ENCODE measurements at regions of chr4 and their contacts with region 1.

Region 1: GRCh38 chr4:7802093-7802726 is 137.5 kb downstream of the AFAP1 start:
- DNase-seq: peak; percentile 86
- H3K4me3 ChIP-seq: no peak overlapping the region
- H3K27ac ChIP-seq: no peak overlapping the region
- H3K4me1 ChIP-seq: peaks cover 42% of the 10 kb centered on the region
- H3K27me3 ChIP-seq: no peaks in the 10 kb centered on the region
- CTCF ChIP-seq: peak; percentile 86 to 91
- POLR2A ChIP-seq: no peak

Region 2: DNA sequence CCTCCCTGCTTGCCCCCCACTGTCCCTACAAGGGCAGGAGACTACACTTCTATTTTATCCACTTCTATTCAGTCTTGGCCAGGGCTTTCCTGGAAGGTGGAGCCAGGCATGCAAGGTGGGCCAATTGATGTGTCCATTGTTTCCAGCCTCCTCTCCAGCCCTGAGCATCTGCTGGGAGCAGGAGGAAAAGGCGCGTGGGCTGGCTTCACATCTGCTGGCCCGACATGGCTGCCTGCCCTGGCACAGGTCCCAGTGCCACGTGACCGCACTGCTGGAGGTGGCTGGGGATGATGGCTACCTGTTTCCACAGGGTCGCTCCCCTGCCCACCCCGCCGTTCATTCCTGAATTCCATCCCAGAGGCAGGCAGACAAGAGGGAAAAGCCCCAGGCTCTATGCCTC is 110.2 kb before region 1 on chr4:
- CTCF ChIA-PET with region 1: no interaction called
- POLR2A ChIA-PET with region 1: no interaction called
- dilution Hi-C with region 1: no loop called
- intact Hi-C with region 1: no loop called
- DNase-seq: no peak
- H3K4me3 ChIP-seq: no peak overlapping the region
- H3K27ac ChIP-seq: no peak overlapping the region
- H3K4me1 ChIP-seq: no peaks in the 10 kb centered on the region
- H3K27me3 ChIP-seq: no peaks in the 10 kb centered on the region
- CTCF ChIP-seq: no peak
- POLR2A ChIP-seq: no peak

Region 3: GRCh38 chr4:7761720-7762119 is 40.5 kb before region 1 on chr4:
- CTCF ChIA-PET with region 1: interaction called, 24 read pairs
- POLR2A ChIA-PET with region 1: no interaction called
- dilution Hi-C with region 1: no loop called
- intact Hi-C with region 1: loop called (anchors 1 kb)
- DNase-seq: peak; percentile 61
- H3K4me3 ChIP-seq: no peak overlapping the region
- H3K27ac ChIP-seq: no peak overlapping the region
- H3K4me1 ChIP-seq: peaks cover 9% of the 10 kb centered on the region
- H3K27me3 ChIP-seq: no peaks in the 10 kb centered on the region
- CTCF ChIP-seq: peak; percentile 70 to 82
- POLR2A ChIP-seq: no peak

Region 4: DNA sequence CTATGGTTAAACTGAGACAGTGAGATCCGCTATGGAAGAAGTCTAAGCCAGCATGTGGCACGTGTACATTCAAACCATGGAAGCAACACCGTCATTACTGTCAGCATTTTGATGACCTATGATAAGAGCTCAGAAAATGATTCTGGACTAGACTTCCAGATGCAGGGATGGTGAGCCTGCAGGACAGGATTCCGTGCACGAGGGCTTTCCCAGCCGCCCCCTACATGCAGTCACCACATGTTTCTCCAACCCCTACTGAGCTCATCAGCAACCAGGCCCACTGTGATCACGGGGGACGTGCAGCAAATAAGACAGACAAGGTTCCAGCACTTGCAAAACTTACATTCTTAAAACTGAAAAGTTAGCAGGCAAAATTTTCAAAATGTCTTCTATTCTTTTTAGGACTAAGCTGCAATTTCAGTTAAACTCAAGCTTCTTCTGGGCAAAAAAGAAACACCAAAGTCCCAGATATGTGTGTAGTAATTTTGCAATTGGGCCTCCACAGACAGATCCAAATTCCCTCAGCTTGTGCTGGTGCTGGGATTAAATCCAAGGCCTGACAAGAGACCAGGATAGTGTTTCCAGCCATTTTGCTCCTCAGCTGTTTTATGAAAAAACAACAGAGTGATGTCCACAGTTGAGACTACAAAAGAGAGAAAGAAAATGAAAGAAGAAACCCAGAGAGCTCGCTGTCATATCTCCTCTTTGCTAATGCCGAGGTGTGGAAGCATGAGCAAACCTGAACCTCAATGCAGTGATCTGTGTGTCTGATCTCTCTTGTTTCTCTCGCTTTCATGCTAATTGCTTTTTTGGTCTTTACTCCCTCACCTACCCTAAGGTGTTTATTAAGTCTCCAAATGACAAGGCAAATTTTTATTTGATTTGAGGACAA is 19.3 kb after region 1 on chr4:
- CTCF ChIA-PET with region 1: interaction called, 33 read pairs
- POLR2A ChIA-PET with region 1: interaction called, 4 read pairs
- dilution Hi-C with region 1: no loop called
- intact Hi-C with region 1: no loop called
- DNase-seq: no peak
- H3K4me3 ChIP-seq: no peak overlapping the region
- H3K27ac ChIP-seq: no peak overlapping the region
- H3K4me1 ChIP-seq: peaks cover 32% of the 10 kb centered on the region
- H3K27me3 ChIP-seq: no peaks in the 10 kb centered on the region
- CTCF ChIP-seq: no peak
- POLR2A ChIP-seq: no peak

Region 5: GRCh38 chr4:7861440-7861881 is 59.3 kb after region 1 on chr4:
- CTCF ChIA-PET with region 1: interaction called, 7 read pairs
- POLR2A ChIA-PET with region 1: interaction called, 3 read pairs
- dilution Hi-C with region 1: no loop called
- intact Hi-C with region 1: loop called (anchors 1 kb)
- DNase-seq: peak; percentile 90
- H3K4me3 ChIP-seq: peak overlapping the region in 1 of 3 experiments; percentile 42
- H3K27ac ChIP-seq: peak overlapping the region; percentile 99
- H3K4me1 ChIP-seq: peaks cover 55% of the 10 kb centered on the region
- H3K27me3 ChIP-seq: no peaks in the 10 kb centered on the region
- CTCF ChIP-seq: no peak
- POLR2A ChIP-seq: no peak

Region 6: GRCh38 chr4:7929118-7929951 is 127.1 kb after region 1 on chr4:
- CTCF ChIA-PET with region 1: interaction called, 55 read pairs
- POLR2A ChIA-PET with region 1: no interaction called
- dilution Hi-C with region 1: no loop called
- intact Hi-C with region 1: no loop called
- DNase-seq: no peak
- H3K4me3 ChIP-seq: no peak overlapping the region
- H3K27ac ChIP-seq: no peak overlapping the region
- H3K4me1 ChIP-seq: peaks cover 38% of the 10 kb centered on the region
- H3K27me3 ChIP-seq: no peaks in the 10 kb centered on the region
- CTCF ChIP-seq: peak in 1 of 2 donors; percentile 12
- POLR2A ChIP-seq: no peak

Region 7: GRCh38 chr4:7987148-7987989 is 185.2 kb after region 1 on chr4:
- CTCF ChIA-PET with region 1: interaction called, 163 read pairs
- POLR2A ChIA-PET with region 1: interaction called, 5 read pairs
- dilution Hi-C with region 1: no loop called
- intact Hi-C with region 1: loop called (anchors 1 kb)
- DNase-seq: peak; percentile 74
- H3K4me3 ChIP-seq: no peak overlapping the region
- H3K27ac ChIP-seq: no peak overlapping the region
- H3K4me1 ChIP-seq: peaks cover 12% of the 10 kb centered on the region
- H3K27me3 ChIP-seq: no peaks in the 10 kb centered on the region
- CTCF ChIP-seq: peak; percentile 84 to 86
- POLR2A ChIP-seq: no peak

Region 8: DNA sequence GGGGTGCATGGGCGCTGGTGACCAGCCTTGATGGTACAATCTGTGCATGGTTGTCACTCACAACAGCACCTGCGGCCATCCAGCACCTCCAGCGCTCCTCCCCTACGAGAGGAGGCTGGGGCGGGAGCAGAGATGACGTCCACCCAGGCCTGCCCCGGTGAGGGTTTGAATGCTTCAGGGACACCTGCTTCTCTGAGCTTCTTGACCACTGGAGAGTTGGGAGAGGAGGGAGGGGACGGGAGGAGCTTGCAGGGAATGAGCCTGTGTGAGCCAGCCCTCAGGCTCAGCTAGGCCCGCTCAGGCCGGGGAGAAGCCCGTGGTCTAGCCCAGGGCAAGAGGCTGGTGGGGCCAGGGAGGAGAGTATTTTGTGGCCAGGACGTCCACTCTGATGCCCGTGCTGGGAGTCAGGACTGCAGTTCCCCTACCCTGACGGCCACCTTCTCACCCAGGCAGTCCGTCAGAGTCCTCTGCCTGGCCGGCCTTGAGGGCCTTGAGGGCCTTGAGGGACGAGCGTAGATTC is 849.5 kb after region 1 on chr4:
- CTCF ChIA-PET with region 1: no interaction called
- POLR2A ChIA-PET with region 1: no interaction called
- dilution Hi-C with region 1: no loop called
- intact Hi-C with region 1: no loop called
- DNase-seq: no peak
- H3K4me3 ChIP-seq: no peak overlapping the region
- H3K27ac ChIP-seq: no peak overlapping the region
- H3K4me1 ChIP-seq: no peaks in the 10 kb centered on the region
- H3K27me3 ChIP-seq: no peaks in the 10 kb centered on the region
- CTCF ChIP-seq: no peak
- POLR2A ChIP-seq: no peak